AG04450 (cell line): ENCODE measurements at regions of chr1 and their contacts with region 1.

Region 1: DNA sequence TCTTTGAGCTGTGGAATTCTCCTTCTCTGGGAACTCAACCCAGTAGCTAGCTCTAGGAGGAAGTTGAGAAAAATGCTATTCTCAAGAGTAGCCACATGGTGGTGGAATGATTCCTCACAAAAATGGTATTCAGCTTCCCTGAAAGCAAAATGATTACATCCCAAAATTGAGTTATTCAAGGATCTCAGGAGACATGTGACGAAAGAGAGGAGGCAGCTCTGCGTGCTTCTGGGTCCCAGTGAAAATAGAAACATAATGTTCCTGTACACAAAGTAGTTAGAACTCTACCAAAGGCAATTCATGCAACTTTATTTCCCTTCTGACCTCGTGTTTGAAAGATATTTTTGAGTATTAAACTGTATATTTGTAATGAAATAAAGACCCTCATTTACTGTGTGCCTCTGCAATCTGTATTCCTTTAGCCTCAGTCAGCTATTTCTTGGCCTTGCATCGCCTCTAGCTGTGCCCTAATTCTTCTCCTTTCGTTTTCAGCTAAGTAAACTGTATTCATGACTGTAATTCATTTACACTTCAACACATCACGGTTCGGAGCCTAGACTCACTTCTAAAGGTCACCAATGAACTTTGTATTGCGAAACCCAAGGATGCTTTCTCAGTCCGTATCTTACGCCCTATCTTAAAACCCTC is 167.3 kb downstream of the FASLG start:
- DNase-seq: peak; percentile 80
- H3K4me3 ChIP-seq: no peak overlapping the region
- H3K27ac ChIP-seq: peak overlapping the region; percentile 59
- H3K27me3 ChIP-seq: no peaks in the 10 kb centered on the region
- CTCF ChIP-seq: peak; percentile 72

Region 2: DNA sequence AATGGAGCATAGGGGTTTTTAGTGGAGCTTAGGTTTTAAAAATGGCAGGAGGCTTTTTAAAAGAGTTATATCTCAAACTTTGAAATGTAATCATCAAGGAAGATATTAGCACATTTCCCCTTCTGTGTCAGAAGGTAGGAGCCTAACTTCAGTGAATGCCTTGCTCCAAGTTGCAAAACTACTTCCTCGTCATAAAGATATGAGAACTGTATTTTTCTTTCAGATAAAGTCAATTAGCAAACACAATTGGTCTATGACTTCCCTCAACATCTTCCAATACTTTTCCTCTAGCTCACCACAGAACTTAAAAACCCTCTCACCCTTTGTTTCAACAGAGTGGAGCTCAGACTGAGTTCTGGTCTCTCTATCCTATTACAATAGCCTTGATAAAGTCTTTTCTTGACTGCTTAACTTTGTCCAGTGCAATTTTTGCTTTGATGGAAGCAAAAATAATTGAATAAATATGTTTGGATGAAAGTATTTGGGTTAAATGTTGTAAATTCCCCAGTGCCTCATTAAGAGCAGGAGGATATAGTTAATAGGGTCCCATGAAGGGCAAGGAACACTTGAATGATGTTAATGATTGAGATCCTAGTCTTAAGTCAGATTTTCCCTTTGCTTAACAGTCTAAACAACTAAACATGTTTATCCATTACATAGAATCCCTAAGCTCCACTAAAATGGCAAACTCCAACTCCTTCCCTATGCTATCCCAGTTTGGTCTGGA is 165.6 kb after region 1 on chr1:
- CTCF ChIA-PET with region 1: interaction called, 10 read pairs
- POLR2A ChIA-PET with region 1: no interaction called
- DNase-seq: no peak
- H3K4me3 ChIP-seq: no peak overlapping the region
- H3K27ac ChIP-seq: no peak overlapping the region
- H3K27me3 ChIP-seq: no peaks in the 10 kb centered on the region
- CTCF ChIP-seq: no peak